ENCODE measurements at regions of chr3 and their contacts with region 1.

Region 1: DNA sequence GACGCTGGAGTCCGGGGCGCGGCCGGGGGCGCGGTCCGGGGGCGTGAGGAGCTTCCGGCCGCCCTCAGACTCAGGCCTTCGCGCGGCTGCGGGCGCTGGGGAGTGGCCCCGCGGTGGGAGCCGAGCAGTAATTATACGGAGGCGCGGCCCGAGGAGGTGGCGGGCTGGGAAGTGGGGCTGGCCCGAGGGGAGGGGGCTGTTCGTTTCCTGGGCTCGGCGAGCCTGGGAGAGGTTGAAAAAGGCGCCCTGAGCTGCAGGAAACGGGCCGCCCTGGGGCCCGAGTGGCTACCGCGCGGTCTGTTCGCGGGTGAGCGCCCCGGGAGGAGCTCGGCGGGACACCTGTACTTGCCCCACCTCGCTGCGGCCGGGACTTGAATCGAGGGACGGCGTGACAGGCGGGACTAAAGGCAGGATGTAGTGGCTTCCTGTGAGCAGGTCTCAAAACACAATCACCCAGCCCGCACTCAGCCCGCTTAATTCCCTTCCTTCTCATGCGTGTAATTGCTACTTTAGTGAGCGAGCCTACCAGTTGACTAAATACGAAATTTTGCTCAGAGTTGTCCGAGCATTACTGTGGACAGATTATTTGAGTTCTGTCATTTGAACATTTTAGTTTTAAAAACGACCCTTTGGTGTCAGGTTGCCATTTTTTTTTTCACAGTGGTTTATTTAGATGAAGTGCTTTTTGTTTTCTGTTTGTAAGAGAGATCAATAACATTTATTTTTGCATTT is 860 bp downstream of the RASA2 start:
- DNase-seq: peak; percentile 96
- ATAC-seq: peak; percentile 78
- H3K4me3 Mint-ChIP-seq: peak overlapping the region; percentile 88
- H3K27ac Mint-ChIP-seq: peak overlapping the region; percentile 96
- H3K4me1 Mint-ChIP-seq: peaks cover 74% of the 10 kb centered on the region
- H3K27me3 Mint-ChIP-seq: no peaks in the 10 kb centered on the region

Region 2: GRCh38 chr3:141331377-141332318 is 156.0 kb before region 1 on chr3:
- CTCF ChIA-PET with region 1: no interaction called
- POLR2A ChIA-PET with region 1: no interaction called
- DNase-seq: no peak
- ATAC-seq: no peak
- H3K4me3 Mint-ChIP-seq: no peak overlapping the region
- H3K27ac Mint-ChIP-seq: no peak overlapping the region
- H3K4me1 Mint-ChIP-seq: no peaks in the 10 kb centered on the region
- H3K27me3 Mint-ChIP-seq: no peaks in the 10 kb centered on the region

Region 3: GRCh38 chr3:141498598-141499223 is 11.0 kb after region 1 on chr3:
- CTCF ChIA-PET with region 1: interaction called, 23 read pairs
- POLR2A ChIA-PET with region 1: interaction called, 105 read pairs
- DNase-seq: peak; percentile 96
- ATAC-seq: peak; percentile 85
- H3K4me3 Mint-ChIP-seq: peak overlapping the region; percentile 73
- H3K27ac Mint-ChIP-seq: peak overlapping the region; percentile 95
- H3K4me1 Mint-ChIP-seq: peaks cover 78% of the 10 kb centered on the region
- H3K27me3 Mint-ChIP-seq: no peaks in the 10 kb centered on the region

Region 4: GRCh38 chr3:141553055-141553454 is 65.4 kb after region 1 on chr3:
- CTCF ChIA-PET with region 1: interaction called, 6 read pairs
- POLR2A ChIA-PET with region 1: interaction called, 49 read pairs
- DNase-seq: peak; percentile 60
- ATAC-seq: peak; percentile 86
- H3K4me3 Mint-ChIP-seq: peak overlapping the region; percentile 55
- H3K27ac Mint-ChIP-seq: peak overlapping the region; percentile 89
- H3K4me1 Mint-ChIP-seq: peaks cover 49% of the 10 kb centered on the region
- H3K27me3 Mint-ChIP-seq: no peaks in the 10 kb centered on the region